Pancreas (tissue), 10 donors: ENCODE measurements at regions of chr2 and their contacts with region 1.

Region 1: DNA sequence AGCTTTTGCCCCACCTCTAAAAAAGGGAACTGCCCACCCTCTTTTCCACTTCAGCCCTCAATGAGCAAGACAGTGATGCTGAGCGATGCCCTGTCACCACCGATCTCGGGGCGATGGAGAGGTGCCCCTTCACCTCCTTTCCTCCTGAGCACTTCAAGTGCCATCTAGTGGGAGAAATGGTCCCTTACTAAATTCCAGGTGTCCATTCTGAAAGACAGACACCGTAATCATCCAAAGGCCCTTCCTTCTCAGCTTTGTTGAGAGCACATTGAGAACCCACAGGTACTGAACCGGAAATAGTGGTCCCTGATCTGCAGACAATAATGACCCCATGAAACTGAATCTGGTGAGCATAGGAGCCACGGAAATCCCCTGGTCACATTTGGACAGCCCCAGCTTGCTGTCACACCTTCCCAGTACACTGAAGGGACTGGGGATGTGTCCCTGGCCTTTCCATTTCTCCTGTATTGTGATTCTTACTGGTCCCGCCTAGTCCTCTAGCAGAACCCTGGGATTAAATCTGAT is 38.5 kb downstream of the KCTD18 start:
- DNase-seq: no peak
- ATAC-seq: peak in 3 of 4 donors; percentile 25 to 53 (median 52)
- H3K4me3 ChIP-seq: no peak overlapping the region
- H3K27ac ChIP-seq: no peak overlapping the region
- H3K4me1 ChIP-seq: no peaks in the 10 kb centered on the region
- H3K27me3 ChIP-seq: no peaks in the 10 kb centered on the region
- CTCF ChIP-seq: peak in 1 of 4 donors; percentile 22

Region 2: DNA sequence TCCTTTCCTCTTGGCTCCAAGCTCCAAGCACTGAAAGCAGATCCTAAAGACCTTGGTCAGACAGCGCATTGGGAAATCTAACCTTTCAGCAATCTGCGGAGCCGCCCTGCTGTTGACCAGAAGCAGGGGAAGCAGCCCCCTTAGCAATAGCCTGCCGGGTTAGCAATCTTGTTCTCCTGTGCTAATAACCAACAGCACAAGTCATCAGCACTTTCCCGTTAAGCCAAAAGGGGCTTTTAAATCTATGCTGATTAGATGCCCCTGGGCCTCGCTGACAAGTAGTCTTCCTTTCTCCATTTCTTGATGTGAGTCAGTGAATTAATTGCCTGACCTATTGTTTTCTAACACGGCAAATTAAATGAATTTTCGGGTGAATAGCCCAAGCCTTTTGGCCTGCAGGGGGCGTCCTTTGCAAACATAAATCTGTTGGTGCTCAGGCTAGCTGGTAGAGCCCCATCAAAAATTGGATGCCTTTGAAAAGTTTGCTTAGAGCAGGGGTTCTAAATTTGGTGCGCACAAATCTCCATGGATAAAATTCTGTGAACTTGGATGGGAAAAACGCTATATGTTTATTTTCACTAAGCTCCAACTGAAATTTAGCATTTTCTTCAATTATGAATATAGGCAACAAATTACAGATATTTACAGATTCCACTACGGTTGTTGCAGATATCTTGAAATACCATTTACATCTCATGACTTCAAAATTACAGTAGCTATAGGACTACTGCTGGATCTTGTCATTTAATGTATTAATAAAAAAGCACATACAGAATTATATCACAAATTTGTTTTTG is 491.4 kb before region 1 on chr2:
- intact Hi-C with region 1: loop called in 2 of 3 experiments (anchors 10 kb)
- DNase-seq: peak; percentile 61 to 98 (median 82)
- ATAC-seq: peak; percentile 80 to 88 (median 88)
- H3K4me3 ChIP-seq: peak overlapping the region in 1 of 4 donors; percentile 9
- H3K27ac ChIP-seq: no peak overlapping the region
- H3K4me1 ChIP-seq: peaks cover 0 to 12% (median 4%) of the 10 kb centered on the region in 3 donors
- H3K27me3 ChIP-seq: no peaks in the 10 kb centered on the region
- CTCF ChIP-seq: peak; percentile 58 to 79 (median 76)

Region 3: GRCh38 chr2:199985625-199986207 is 485.7 kb before region 1 on chr2:
- intact Hi-C with region 1: loop called in 2 of 3 experiments (anchors 10 kb)
- DNase-seq: peak in 5 of 6 donors; percentile 60 to 74 (median 62)
- ATAC-seq: peak; percentile 88 to 99 (median 98)
- H3K4me3 ChIP-seq: no peak overlapping the region
- H3K27ac ChIP-seq: no peak overlapping the region
- H3K4me1 ChIP-seq: no peaks in the 10 kb centered on the region
- H3K27me3 ChIP-seq: no peaks in the 10 kb centered on the region
- CTCF ChIP-seq: peak; percentile 31 to 62 (median 48)

Region 4: DNA sequence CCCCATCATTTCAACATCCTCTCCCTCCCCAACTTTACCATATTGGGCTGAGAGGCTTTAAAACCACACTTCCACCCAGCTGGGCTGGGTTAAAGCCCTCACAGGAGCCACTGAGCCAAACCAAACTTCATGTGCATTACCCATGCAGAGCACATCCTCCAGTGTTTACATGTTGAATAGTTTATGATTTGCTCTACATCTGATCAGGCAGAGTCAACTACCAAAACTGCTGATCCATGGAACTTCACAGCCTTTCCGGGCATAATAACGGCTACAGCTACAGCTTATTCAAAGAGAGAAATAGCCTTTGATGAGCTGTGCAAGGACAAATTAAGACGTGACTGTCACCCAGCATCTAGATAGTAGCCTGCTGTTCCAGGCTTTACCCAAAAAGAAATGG is 477.0 kb before region 1 on chr2:
- intact Hi-C with region 1: loop called in 2 of 3 experiments (anchors 10 kb)
- DNase-seq: no peak
- ATAC-seq: peak in 1 of 4 donors; percentile 20
- H3K4me3 ChIP-seq: no peak overlapping the region
- H3K27ac ChIP-seq: no peak overlapping the region
- H3K4me1 ChIP-seq: no peaks in the 10 kb centered on the region
- H3K27me3 ChIP-seq: no peaks in the 10 kb centered on the region
- CTCF ChIP-seq: no peak

Region 5: DNA sequence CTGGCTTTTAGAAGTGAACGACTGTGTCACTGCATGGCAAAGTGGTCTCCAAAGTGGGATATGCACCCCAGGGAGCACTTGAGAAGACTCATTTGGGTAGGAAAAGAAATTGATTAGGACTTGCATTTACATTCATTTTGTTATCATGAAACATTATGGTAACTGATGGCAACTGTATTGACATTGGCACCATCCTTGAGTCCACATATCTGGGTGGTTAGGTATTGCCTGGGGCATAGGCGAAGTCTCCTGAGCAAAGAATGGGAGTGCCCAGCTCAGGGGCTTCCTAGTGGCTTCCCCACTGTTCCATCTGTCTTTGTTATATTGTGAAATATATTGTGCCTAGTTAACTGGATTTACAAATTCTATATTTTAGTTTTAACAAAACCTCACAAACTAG is 135.7 kb before region 1 on chr2:
- intact Hi-C with region 1: no loop called
- DNase-seq: no peak
- ATAC-seq: peak; percentile 53 to 87 (median 81)
- H3K4me3 ChIP-seq: no peak overlapping the region
- H3K27ac ChIP-seq: peak overlapping the region in 2 of 4 donors; percentile 23 to 62
- H3K4me1 ChIP-seq: peaks cover 6 to 35% (median 27%) of the 10 kb centered on the region in 3 donors
- H3K27me3 ChIP-seq: no peaks in the 10 kb centered on the region
- CTCF ChIP-seq: no peak

Region 6: GRCh38 chr2:200367199-200367598 is 104.2 kb before region 1 on chr2:
- intact Hi-C with region 1: no loop called
- DNase-seq: no peak
- ATAC-seq: peak in 3 of 4 donors; percentile 27 to 47 (median 35)
- H3K4me3 ChIP-seq: no peak overlapping the region
- H3K27ac ChIP-seq: no peak overlapping the region
- H3K4me1 ChIP-seq: peaks cover 0 to 7% (median 0%) of the 10 kb centered on the region in 3 donors
- H3K27me3 ChIP-seq: no peaks in the 10 kb centered on the region
- CTCF ChIP-seq: no peak

Region 7: GRCh38 chr2:200778038-200778437 is 306.7 kb after region 1 on chr2:
- intact Hi-C with region 1: no loop called
- DNase-seq: no peak
- ATAC-seq: peak in 1 of 4 donors; percentile 12
- H3K4me3 ChIP-seq: no peak overlapping the region
- H3K27ac ChIP-seq: no peak overlapping the region
- H3K4me1 ChIP-seq: no peaks in the 10 kb centered on the region
- H3K27me3 ChIP-seq: no peaks in the 10 kb centered on the region
- CTCF ChIP-seq: no peak